ENCODE measurements at regions of chr2 and their contacts with region 1.

Region 1: DNA sequence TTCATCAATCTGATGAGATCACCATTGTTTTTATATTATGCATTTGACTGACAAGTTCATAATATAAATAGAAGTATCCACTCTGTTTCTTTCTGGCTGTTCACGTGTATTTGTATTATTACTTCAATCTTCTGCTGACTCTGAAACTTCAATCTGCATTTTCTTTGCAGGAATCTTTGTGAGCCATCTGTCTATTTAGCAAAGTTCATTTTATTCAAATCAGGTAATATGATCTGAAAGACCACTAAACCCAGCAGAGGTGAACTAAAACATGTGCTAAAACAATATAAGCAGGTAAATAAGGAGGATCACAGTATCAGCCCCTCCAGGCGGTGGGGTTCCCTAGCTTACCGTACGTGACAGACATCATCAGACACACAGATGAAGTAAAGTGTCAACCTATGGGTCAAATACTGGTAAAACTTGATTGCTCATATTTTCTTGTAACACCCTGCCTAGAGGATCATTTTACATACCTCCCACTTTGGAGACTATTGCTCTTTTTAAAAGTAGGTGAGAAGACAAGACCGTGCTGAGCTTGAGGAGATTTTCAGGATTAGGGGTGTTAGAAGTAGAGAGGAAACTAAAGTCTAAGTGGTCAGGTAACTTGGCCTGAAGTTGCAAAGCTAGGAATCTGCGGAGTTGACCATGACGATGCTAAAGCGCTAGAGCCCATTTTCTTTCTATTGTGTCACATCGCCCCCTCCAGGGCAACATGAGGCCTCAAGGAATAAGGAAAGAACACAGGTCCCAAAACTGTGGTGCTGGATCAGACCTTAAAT is 9.0 kb downstream of the DTNB start:
- DNase-seq: peak; percentile 26 to 80 (median 48)
- ATAC-seq: peak; percentile 97
- H3K4me3 ChIP-seq: no peak overlapping the region
- H3K27ac ChIP-seq: no peak overlapping the region
- H3K4me1 ChIP-seq: no peaks in the 10 kb centered on the region; a peak in 1 of 5 replicates
- H3K27me3 ChIP-seq: no peaks in the 10 kb centered on the region; a peak in 3 of 5 replicates
- CTCF ChIP-seq: peak; percentile 79 to 85 (median 79)
- EP300 ChIP-seq: no peak
- POLR2A ChIP-seq: no peak
- RAD21 ChIP-seq: peak; percentile 55 to 77

Region 2: GRCh38 chr2:25309402-25309801 is 355.0 kb before region 1 on chr2:
- CTCF ChIA-PET with region 1: no interaction called
- POLR2A ChIA-PET with region 1: no interaction called
- in situ Hi-C with region 1: no loop called
- intact Hi-C with region 1: loop called (anchors 10 kb)
- DNase-seq: peak; percentile 74 to 81 (median 78)
- ATAC-seq: peak; percentile 90
- H3K4me3 ChIP-seq: no peak overlapping the region
- H3K27ac ChIP-seq: no peak overlapping the region
- H3K4me1 ChIP-seq: peaks cover 0 to 26% of the 10 kb centered on the region in 2 experiments; a peak in 2 of 5 replicates
- H3K27me3 ChIP-seq: peaks cover 10 to 50% of the 10 kb centered on the region in 2 experiments; a peak in 4 of 5 replicates
- CTCF ChIP-seq: peak; percentile 66 to 82 (median 68)
- EP300 ChIP-seq: no peak
- POLR2A ChIP-seq: no peak
- RAD21 ChIP-seq: peak; percentile 40 to 72

Region 3: GRCh38 chr2:25606892-25607291 is 57.5 kb before region 1 on chr2:
- CTCF ChIA-PET with region 1: interaction called, 17 read pairs
- POLR2A ChIA-PET with region 1: interaction called, 9 read pairs
- in situ Hi-C with region 1: loop called (anchors 5 kb)
- intact Hi-C with region 1: loop called (anchors 1 kb)
- DNase-seq: peak; percentile 12 to 50 (median 18)
- ATAC-seq: 0 out of 3 replicates have a peak, but pooled peaks have one; percentile 55
- H3K4me3 ChIP-seq: no peak overlapping the region
- H3K27ac ChIP-seq: no peak overlapping the region
- H3K4me1 ChIP-seq: no peaks in the 10 kb centered on the region
- H3K27me3 ChIP-seq: peaks cover 0 to 6% of the 10 kb centered on the region in 2 experiments; a peak in 1 of 5 replicates
- CTCF ChIP-seq: peak; percentile 54 to 80 (median 61)
- EP300 ChIP-seq: no peak
- POLR2A ChIP-seq: no peak
- RAD21 ChIP-seq: peak; percentile 55 to 80

Region 4: GRCh38 chr2:25614686-25615085 is 49.7 kb before region 1 on chr2:
- CTCF ChIA-PET with region 1: no interaction called
- POLR2A ChIA-PET with region 1: no interaction called
- in situ Hi-C with region 1: loop called (anchors 5 kb)
- intact Hi-C with region 1: no loop called
- DNase-seq: no peak
- ATAC-seq: no peak
- H3K4me3 ChIP-seq: no peak overlapping the region
- H3K27ac ChIP-seq: no peak overlapping the region
- H3K4me1 ChIP-seq: no peaks in the 10 kb centered on the region
- H3K27me3 ChIP-seq: peaks cover 20 to 26% of the 10 kb centered on the region in 2 experiments
- CTCF ChIP-seq: no peak
- EP300 ChIP-seq: no peak
- POLR2A ChIP-seq: no peak
- RAD21 ChIP-seq: no peak

Region 5: DNA sequence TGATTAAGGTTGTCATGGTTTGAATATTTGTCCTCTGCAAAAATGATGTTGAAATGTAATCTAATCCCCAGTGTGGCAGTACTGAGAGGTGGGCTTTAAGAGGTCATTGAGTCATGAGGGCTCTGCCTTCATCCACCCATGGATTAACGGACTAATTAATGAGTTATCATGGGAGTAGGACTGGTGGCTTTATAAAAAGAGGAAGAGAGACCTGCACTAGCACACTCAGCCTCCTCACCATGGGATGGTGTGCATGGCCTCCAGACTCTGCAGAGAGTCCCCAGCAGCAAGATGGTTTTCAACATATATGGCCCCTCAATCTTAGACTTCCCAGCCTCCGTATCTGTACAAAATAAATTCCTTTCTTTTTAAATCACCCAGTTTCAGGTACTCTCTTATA is 32.0 kb before region 1 on chr2:
- CTCF ChIA-PET with region 1: no interaction called
- POLR2A ChIA-PET with region 1: no interaction called
- in situ Hi-C with region 1: no loop called
- intact Hi-C with region 1: no loop called
- DNase-seq: no peak
- ATAC-seq: no peak
- H3K4me3 ChIP-seq: no peak overlapping the region
- H3K27ac ChIP-seq: no peak overlapping the region
- H3K4me1 ChIP-seq: no peaks in the 10 kb centered on the region
- H3K27me3 ChIP-seq: peaks cover 0 to 8% of the 10 kb centered on the region in 2 experiments; a peak in 2 of 5 replicates
- CTCF ChIP-seq: no peak
- EP300 ChIP-seq: no peak
- POLR2A ChIP-seq: no peak
- RAD21 ChIP-seq: no peak

Region 6: DNA sequence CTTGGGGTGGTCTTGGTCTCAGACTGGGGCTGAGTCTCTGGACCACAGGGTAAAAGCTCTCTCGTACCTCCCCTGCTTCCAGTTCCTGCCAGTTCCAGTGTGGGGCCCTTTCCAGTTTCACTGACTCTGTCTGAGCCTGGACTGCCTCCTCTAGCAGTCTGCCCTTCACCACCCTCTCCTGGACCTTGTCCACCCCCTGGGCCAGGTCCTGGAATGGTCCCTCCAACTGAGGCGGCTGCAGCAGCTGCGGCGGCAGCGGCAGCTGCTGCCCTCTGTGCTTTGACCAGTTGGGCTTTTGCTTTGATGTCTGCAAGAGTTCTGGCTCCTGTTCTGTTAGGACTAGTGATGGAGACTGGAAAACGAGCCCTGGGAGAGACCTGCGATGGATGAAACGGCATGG is 79.7 kb after region 1 on chr2:
- CTCF ChIA-PET with region 1: no interaction called
- POLR2A ChIA-PET with region 1: no interaction called
- in situ Hi-C with region 1: no loop called
- intact Hi-C with region 1: no loop called
- DNase-seq: no peak
- ATAC-seq: no peak
- H3K4me3 ChIP-seq: no peak overlapping the region
- H3K27ac ChIP-seq: no peak overlapping the region
- H3K4me1 ChIP-seq: no peaks in the 10 kb centered on the region
- H3K27me3 ChIP-seq: no peaks in the 10 kb centered on the region
- CTCF ChIP-seq: no peak
- EP300 ChIP-seq: no peak
- POLR2A ChIP-seq: no peak
- RAD21 ChIP-seq: no peak